ENCODE measurements at regions of chr12 and their contacts with region 1.

Region 1: DNA sequence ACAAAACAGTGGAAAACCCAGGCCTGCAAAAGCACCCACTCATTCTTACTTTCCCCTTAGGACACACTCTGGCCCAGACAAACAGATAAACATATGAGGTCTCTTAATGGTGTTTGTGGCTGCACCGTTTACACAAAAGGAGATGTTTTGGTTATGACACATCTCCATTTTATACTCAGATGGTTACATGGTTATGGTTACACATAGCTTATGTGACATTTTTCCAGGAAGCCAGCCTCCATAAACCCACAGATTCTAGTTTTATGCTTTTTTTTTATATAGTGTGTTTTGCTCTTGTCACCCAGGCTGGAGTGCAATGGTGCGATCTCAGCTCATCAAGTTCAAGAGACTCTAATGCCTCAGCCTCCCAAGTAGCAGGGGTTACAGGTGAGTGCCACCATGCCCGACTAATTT is 3.5 kb upstream of the KLRD1 start:
- DNase-seq: peak; percentile 65
- H3K4me3 Mint-ChIP-seq: no peak overlapping the region
- H3K27ac Mint-ChIP-seq: peak overlapping the region; percentile 46
- H3K4me1 Mint-ChIP-seq: peaks cover 44% of the 10 kb centered on the region
- H3K27me3 Mint-ChIP-seq: peaks cover 21% of the 10 kb centered on the region

Region 2: DNA sequence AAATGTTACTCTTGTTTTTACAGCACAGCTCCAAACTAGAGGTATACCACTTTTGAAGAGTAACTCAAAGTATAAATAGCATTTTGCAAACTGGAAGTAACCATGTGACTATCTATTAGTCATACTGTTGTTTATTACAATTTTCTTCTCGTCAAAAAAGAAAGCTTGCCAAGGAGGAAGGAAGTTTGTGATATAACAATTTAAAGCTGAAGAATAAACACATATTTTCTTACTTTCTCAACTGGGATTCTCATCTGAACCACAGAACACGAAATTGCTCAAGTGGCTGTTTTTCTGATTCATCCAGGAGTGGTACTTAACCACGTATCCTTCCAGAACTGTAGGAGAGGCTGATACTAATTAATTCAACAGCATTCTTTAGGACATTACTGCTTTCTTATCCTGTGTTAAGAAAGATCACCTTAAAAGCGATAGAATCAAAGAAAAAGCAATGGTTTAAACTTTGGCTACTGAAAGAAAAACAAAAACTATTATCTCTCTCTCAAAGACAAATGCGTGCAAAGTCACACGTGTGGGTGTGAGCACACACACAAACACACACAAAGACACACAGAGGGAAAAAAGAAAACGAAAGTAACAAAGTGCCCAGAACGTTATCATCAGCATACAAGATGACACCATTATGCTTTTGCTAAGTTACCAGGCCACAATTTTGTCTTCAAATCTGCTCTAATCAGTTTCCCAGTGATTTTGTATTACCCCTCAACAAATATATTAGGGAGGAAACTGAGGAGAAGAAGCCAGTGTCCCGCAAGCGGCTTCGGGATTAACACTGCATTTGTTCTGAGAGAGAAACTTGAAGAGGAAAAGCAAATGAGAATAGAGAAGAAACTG is 434.6 kb before region 1 on chr12 and contains the start of gene CLEC2B:
- CTCF ChIA-PET with region 1: no interaction called
- POLR2A ChIA-PET with region 1: no interaction called
- intact Hi-C with region 1: loop called (anchors 5 kb)
- DNase-seq: peak; percentile 41
- H3K4me3 Mint-ChIP-seq: peak within 1 kb of the TSS; percentile 82
- H3K27ac Mint-ChIP-seq: peak within 1 kb of the TSS; percentile 93
- H3K4me1 Mint-ChIP-seq: peaks cover 19% of the 10 kb centered on the region
- H3K27me3 Mint-ChIP-seq: no peaks in the 10 kb centered on the region
- total RNA-seq, gene CLEC2B: 12.6 to 13.7 TPM

Region 3: DNA sequence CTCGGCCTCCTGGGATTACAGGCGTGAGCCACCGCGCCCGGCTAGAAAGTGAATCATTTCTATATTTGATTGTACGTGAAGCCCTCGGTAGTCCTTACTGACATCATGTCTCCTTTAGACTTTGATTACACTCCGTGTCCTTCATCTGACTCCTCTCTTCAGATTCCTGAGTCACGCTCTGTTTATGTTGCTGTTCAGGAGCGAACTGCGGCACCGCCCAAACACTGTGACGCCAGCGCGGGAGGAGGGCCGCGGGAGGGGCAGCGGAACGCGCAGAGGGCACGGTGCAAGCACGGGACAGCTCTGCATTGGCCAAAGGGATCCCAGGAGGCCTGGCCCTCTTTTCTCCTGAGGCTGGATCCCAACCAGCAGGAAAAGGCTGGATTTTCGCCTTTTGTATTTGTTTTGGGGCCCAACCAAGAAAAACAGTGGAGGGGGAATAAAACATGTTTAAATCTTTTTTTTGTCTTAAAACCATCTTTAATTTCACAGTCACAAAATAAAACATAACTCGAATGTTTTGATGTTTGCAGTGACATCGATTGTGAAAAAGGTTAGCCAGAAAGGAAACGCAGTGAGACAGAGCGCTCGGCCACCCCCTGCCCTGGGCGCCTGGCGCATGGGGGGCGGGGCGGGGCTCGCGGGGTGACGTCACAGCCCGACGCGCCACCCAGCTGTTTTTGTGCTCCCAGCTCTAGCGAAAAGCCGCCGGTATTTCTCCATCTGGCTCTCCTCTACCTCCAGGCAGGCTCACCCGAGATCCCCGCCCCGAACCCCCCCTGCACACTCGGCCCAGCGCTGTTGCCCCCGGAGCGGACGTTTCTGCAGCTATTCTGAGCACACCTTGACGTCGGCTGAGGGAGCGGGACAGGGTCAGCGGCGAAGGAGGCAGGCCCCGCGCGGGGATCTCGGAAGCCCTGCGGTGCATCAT is 91.7 kb before region 1 on chr12 and contains the start of gene GABARAPL1:
- CTCF ChIA-PET with region 1: no interaction called
- POLR2A ChIA-PET with region 1: no interaction called
- intact Hi-C with region 1: loop called (anchors 1 kb)
- DNase-seq: peak; percentile 94
- H3K4me3 Mint-ChIP-seq: peak within 1 kb of the TSS; percentile 89
- H3K27ac Mint-ChIP-seq: peak within 1 kb of the TSS; percentile 78
- H3K4me1 Mint-ChIP-seq: peaks cover 21% of the 10 kb centered on the region
- H3K27me3 Mint-ChIP-seq: no peaks in the 10 kb centered on the region
- total RNA-seq, gene GABARAPL1: 7.2 to 8.9 TPM

Region 4: GRCh38 chr12:10320643-10321042 is 16.5 kb after region 1 on chr12:
- CTCF ChIA-PET with region 1: interaction called, 7 read pairs
- POLR2A ChIA-PET with region 1: interaction called, 14 read pairs
- intact Hi-C with region 1: loop called (anchors 1 kb)
- DNase-seq: no peak
- H3K4me3 Mint-ChIP-seq: no peak overlapping the region
- H3K27ac Mint-ChIP-seq: peak overlapping the region; percentile 46
- H3K4me1 Mint-ChIP-seq: peaks cover 24% of the 10 kb centered on the region
- H3K27me3 Mint-ChIP-seq: peaks cover 21% of the 10 kb centered on the region

Region 5: DNA sequence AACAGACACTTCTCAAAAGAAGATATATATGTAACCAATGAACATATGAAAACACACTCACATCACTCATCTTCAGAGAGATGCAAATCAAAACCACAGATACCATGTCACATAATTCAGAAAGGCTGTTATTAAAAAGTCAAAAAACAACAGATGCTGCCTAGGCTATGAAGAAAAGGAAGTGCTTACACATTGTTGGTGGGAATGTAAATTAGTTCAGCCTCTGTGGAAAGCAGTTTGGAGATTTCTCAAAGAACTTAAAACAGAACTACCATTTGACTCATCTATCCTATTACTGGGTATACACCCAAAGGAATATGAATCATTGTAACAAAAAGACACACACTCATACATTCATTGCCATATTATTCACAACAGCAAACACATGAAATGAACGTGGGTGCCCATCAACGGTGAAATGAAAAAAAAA is 236.6 kb after region 1 on chr12:
- CTCF ChIA-PET with region 1: no interaction called
- POLR2A ChIA-PET with region 1: no interaction called
- intact Hi-C with region 1: loop called (anchors 1 kb)
- DNase-seq: no peak
- H3K4me3 Mint-ChIP-seq: no peak overlapping the region
- H3K27ac Mint-ChIP-seq: no peak overlapping the region
- H3K4me1 Mint-ChIP-seq: peaks cover 9% of the 10 kb centered on the region
- H3K27me3 Mint-ChIP-seq: peaks cover 39% of the 10 kb centered on the region

Region 6: DNA sequence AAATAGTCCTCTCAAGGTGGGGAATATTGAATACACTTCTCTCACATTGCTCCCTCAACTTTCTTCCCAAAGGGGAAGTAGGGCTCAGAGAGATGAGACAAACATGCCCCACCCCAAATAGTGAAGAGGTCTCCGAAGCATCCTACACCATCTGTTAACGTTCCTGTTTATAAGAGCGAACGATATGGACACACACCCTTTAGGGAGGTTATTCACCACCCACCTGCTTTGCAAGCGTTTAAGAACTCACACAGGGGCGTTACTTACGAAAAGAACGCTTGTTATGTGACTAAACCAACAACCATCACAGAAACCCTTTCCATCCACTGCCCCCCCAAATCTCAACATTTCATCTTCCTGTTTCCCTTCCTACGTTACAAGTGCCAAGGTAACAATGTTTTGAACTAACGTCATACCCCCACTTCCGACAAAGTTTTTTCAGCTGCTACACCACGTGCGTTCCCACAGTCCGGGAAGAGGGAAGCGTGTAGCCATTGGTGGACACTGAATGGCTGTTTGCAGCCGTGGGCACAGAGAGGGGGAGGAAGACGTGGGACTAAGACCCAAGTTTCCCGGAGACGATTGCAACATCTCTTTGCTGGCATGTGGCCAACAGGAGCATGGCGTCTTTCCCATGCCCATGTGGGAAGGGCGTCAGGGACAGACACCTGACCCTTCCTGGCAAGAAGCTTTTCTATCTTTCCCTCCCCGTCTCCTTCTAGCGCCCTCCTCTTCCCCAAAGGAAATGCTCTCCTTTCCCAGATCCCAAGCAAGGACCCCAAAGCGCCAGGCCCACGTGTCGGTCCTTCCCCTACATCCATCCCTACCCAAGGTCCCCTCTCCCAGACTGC is 417.7 kb after region 1 on chr12:
- CTCF ChIA-PET with region 1: no interaction called
- POLR2A ChIA-PET with region 1: no interaction called
- intact Hi-C with region 1: loop called (anchors 2 kb)
- DNase-seq: peak; percentile 69
- H3K4me3 Mint-ChIP-seq: peak overlapping the region; percentile 93
- H3K27ac Mint-ChIP-seq: peak overlapping the region; percentile 86
- H3K4me1 Mint-ChIP-seq: peaks cover 20% of the 10 kb centered on the region
- H3K27me3 Mint-ChIP-seq: peaks cover 53% of the 10 kb centered on the region

Region 7: GRCh38 chr12:10867381-10867780 is 563.2 kb after region 1 on chr12:
- CTCF ChIA-PET with region 1: no interaction called
- POLR2A ChIA-PET with region 1: no interaction called
- intact Hi-C with region 1: no loop called
- DNase-seq: no peak
- H3K4me3 Mint-ChIP-seq: no peak overlapping the region
- H3K27ac Mint-ChIP-seq: no peak overlapping the region
- H3K4me1 Mint-ChIP-seq: no peaks in the 10 kb centered on the region
- H3K27me3 Mint-ChIP-seq: no peaks in the 10 kb centered on the region

Measured in activated CD4-positive, alpha-beta memory T cell treated with anti-CD3 and anti-CD28 coated beads for 36 hours (primary cell).